Naive thymus-derived CD8-positive, alpha-beta T cell (primary cell): ENCODE measurements at regions of chr20 and their contacts with region 1.

Region 1: DNA sequence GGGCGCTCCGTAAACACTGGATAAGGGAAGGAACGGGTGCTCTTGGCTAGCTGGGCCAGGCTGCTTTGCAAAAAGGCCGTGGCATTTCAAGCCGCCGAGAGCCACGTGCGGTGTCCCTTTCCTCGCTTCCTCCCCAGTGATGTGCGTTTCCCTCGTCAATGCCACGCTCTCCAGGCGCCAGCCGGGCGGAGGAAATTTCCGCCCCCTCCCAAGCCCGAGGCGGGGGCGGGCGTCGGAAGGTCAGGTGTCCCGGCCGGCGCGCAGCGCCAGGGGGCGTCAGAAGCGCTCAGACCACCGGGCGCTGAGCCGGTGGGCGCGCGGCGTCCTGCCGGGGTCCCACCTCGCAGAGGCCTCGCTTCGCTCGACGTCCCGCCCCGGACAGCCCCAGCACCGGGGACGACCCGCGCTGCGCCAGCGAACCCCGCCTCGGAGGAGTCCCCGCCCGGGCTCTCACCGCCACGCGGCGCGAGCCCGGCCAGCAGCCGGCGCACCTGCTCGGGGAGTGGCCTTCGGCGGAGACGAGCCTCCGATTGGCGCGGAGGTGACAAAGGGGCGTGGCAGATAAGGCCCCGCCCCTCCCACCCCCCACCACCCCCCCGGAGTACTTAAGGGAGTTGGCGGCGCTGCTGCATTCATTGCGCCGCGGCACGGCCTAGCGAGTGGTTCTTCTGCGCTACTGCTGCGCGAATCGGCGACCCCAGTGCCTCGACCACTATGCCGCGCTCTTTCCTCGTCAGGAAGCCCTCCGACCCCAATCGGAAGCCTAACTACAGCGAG is at the start of gene SNAI1:
- DNase-seq: peak; percentile 78 to 93 (median 84)
- ATAC-seq: peak; percentile 91 to 94
- H3K4me3 Mint-ChIP-seq: peak within 1 kb of the TSS; percentile 63 to 80 (median 77)
- H3K27ac Mint-ChIP-seq: peak within 1 kb of the TSS in 9 of 10 donors; percentile 63 to 94 (median 87)
- H3K4me1 Mint-ChIP-seq: peaks cover 17 to 40% (median 34%) of the 10 kb centered on the region in 4 donors
- H3K27me3 Mint-ChIP-seq: no peaks in the 10 kb centered on the region
- polyA plus RNA-seq, gene SNAI1: 0.25 to 0.64 TPM in 2 of 3 donors, not detected in the other

Region 2: GRCh38 chr20:50070991-50071888 is 88.7 kb after region 1 on chr20:
- POLR2A ChIA-PET with region 1: interaction called, 29 read pairs
- DNase-seq: peak; percentile 79 to 95 (median 90)
- ATAC-seq: peak; percentile 100
- H3K4me3 Mint-ChIP-seq: peak overlapping the region; percentile 62 to 82 (median 73)
- H3K27ac Mint-ChIP-seq: peak overlapping the region in 3 of 10 donors; percentile 37 to 77 (median 41)
- H3K4me1 Mint-ChIP-seq: peaks cover 4 to 9% (median 7%) of the 10 kb centered on the region in 4 donors
- H3K27me3 Mint-ChIP-seq: peaks cover 0 to 3% (median 0%) of the 10 kb centered on the region in 5 donors